ENCODE measurements at regions of chr11 and their contacts with region 1.

Region 1: GRCh38 chr11:65117216-65118096 is at the start of gene ZNHIT2:
- H3K4me3 ChIP-seq: peak within 1 kb of the TSS; percentile 67
- H3K27ac ChIP-seq: peak within 1 kb of the TSS; percentile 78
- H3K4me1 ChIP-seq: peaks cover 6% of the 10 kb centered on the region
- CTCF ChIP-seq: peak; percentile 78

Region 2: GRCh38 chr11:65083834-65084597 is 33.4 kb before region 1 on chr11 and contains the starts of genes CDCA5 and ZFPL1:
- CTCF ChIA-PET with region 1: interaction called, 3 read pairs
- POLR2A ChIA-PET with region 1: interaction called, 11 read pairs
- H3K4me3 ChIP-seq: peak within 1 kb of the TSS; percentile 92
- H3K27ac ChIP-seq: peak within 1 kb of the TSS; percentile 81
- H3K4me1 ChIP-seq: peaks cover 3% of the 10 kb centered on the region; the same call in 1 of the 2 replicates
- CTCF ChIP-seq: no peak; the same call in 1 of the 2 replicates

Region 3: DNA sequence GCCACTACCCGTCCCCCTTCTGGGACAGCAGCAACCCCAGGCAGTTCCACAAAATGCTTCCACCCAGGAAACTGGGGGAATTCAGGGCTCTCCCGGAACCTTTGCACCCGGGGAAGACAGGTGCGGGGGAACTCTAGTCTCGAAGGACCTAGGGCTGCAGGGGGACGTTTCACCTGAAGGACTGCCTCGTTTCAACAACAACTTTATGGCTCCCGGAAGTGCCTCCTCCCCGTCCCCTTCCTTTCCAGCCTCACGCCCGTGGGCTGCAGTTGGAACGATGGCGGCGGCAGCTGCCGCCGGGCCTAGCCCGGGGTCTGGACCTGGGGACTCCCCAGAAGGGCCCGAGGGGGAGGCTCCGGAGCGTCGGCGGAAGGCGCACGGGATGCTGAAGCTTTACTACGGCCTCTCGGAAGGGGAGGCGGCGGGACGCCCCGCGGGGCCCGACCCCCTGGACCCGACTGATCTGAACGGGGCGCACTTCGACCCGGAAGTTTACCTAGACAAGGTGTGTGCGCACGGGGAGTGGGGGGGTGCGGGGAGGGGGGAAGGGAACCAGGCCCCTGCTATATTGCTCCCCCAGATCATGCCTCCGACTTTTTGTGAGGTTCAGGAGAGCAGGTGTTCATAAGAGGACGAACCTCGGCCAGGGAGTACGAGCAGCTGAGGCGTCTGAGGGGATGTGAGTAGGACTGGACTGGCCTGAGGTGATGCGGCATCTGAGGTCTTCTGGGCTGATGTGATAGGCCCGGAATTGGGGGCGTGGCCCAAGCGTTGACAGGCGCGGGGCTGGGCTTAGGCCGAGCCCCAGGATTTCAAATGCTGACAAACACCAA is 21.3 kb before region 1 on chr11 and contains the start of gene VPS51:
- CTCF ChIA-PET with region 1: interaction called, 110 read pairs
- POLR2A ChIA-PET with region 1: interaction called, 24 read pairs
- H3K4me3 ChIP-seq: peak within 1 kb of the TSS; percentile 61
- H3K27ac ChIP-seq: peak within 1 kb of the TSS; percentile 60; the same call in 1 of the 2 replicates
- H3K4me1 ChIP-seq: peaks cover 3% of the 10 kb centered on the region; the same call in 1 of the 2 replicates
- CTCF ChIP-seq: no peak

Region 4: DNA sequence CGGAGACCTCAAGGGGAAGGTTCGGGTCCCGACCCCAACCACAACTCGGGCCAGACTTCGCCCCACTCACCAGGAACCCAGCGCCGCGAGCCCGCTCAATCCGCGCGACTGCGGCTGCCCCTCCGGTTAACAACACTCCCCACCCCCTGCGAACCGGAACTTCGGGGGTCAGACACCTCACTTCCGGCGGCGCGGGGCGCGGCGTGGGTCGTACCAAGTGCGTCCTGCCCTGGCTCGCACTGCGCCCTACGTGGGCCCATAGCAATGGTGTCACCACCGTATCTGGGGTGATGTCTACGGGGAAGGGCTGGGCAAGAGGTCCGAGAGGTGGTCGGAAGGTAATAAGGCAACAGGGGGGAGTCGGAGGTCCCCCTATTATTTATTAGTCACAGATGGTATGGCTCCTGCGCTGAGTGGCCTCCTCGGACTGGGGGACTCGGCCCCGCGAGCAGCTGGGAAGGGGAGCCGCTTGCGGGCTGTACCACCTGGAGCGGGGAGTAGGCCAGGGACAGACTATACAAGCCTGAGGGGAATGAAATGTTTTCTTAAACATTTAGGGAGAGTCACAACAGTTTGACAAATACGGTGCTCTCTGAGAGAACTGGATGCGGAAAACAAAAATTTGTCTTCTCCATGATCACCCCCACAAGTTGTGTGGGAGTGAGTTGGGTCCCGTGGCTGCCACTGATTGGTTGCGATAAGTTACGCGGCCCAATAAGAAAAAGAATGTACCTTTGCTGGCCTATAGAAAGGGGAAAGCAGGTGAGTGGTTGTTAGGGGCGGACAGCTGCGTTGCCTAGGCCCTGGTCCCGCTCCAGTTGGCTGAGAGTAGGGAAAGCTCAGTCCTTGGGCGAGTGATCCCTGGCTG is 17.2 kb after region 1 on chr11 and contains the start of gene SYVN1:
- CTCF ChIA-PET with region 1: interaction called, 7 read pairs
- POLR2A ChIA-PET with region 1: interaction called, 57 read pairs
- H3K4me3 ChIP-seq: peak within 1 kb of the TSS; percentile 81
- H3K27ac ChIP-seq: peak within 1 kb of the TSS; percentile 83
- H3K4me1 ChIP-seq: no peaks in the 10 kb centered on the region; the same call in 1 of the 2 replicates
- CTCF ChIP-seq: no peak

Region 5: GRCh38 chr11:65180877-65181568 is 63.6 kb after region 1 on chr11:
- CTCF ChIA-PET with region 1: interaction called, 6 read pairs
- POLR2A ChIA-PET with region 1: interaction called, 23 read pairs
- H3K4me3 ChIP-seq: peak overlapping the region; percentile 91
- H3K27ac ChIP-seq: peak overlapping the region; percentile 36; the same call in 1 of the 2 replicates
- H3K4me1 ChIP-seq: no peaks in the 10 kb centered on the region
- CTCF ChIP-seq: peak; percentile 69

Measured in HEK293 (cell line).